ENCODE measurements at regions of chr4 and their contacts with region 1.

Region 1: DNA sequence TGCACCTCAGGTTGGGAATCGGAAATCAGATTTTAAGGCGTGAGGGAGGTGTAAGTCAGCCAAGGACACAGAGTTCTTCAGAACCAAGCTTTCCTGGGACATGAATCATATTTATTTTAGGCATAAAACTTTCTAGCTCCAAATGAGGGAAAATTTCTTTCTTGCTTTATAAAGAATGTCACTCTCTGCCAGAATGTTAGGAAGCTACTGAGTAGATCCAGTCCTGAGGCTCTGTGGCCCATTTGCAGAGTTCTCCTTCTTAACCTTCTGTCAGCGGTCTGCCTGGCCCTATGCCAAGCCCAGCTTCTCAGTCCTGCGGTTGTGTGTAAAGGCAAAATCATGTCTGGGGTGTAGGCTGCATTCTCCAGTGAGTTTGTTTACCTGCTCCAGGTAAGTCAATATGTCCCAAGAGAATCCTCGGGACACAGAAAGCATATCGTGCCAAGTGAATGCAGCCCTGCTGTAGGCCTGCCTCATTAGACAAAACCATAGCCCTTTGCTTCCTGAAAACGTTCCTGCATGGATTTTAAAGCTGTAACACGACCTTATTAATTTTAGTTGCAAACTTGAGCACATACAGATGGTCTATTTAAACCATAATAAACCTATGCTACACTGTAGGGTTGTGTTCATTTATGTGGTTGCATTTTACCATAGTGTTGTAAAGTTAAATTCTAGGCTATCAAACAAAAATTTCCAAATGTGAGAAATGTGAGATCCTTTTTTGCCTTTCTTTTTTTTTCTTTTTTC is 29.2 kb upstream of the CCNI start:
- DNase-seq: peak; percentile 60 to 80 (median 66)
- H3K4me3 ChIP-seq: no peak overlapping the region
- H3K27ac ChIP-seq: no peak overlapping the region
- H3K4me1 ChIP-seq: no peaks in the 10 kb centered on the region
- H3K27me3 ChIP-seq: no peaks in the 10 kb centered on the region
- CTCF ChIP-seq: no peak
- EP300 ChIP-seq: no peak
- POLR2A ChIP-seq: no peak

Region 2: GRCh38 chr4:76546282-76547171 is 558.4 kb before region 1 on chr4:
- intact Hi-C with region 1: no loop called
- DNase-seq: peak in 1 of 5 donors; percentile 24
- H3K4me3 ChIP-seq: no peak overlapping the region
- H3K27ac ChIP-seq: no peak overlapping the region
- H3K4me1 ChIP-seq: no peaks in the 10 kb centered on the region
- H3K27me3 ChIP-seq: no peaks in the 10 kb centered on the region
- CTCF ChIP-seq: no peak
- EP300 ChIP-seq: no peak
- POLR2A ChIP-seq: no peak

Region 3: DNA sequence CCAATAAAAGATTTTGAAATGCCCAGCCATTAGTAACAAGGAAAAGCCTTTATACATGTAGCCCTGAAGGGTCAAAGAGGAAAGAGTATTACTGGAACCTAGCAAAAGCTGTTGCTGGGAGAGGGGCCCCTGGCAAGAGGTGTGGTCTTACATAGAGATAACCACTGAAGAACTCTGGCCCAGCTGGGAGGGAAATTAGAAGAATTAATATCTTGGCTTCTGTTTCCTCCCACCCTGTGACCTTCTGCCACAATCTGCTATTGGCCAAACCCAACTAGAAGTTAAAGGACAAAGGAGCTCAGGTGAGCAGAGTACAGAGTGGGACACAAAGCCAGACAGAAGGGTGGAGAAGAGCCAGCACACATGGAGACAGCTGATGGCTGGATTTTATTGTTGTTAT is 12.8 kb after region 1 on chr4:
- intact Hi-C with region 1: loop called in 1 of 4 experiments (anchors 1 kb)
- DNase-seq: no peak
- H3K4me3 ChIP-seq: no peak overlapping the region
- H3K27ac ChIP-seq: no peak overlapping the region
- H3K4me1 ChIP-seq: no peaks in the 10 kb centered on the region
- H3K27me3 ChIP-seq: no peaks in the 10 kb centered on the region
- CTCF ChIP-seq: no peak
- EP300 ChIP-seq: no peak
- POLR2A ChIP-seq: no peak

Region 4: DNA sequence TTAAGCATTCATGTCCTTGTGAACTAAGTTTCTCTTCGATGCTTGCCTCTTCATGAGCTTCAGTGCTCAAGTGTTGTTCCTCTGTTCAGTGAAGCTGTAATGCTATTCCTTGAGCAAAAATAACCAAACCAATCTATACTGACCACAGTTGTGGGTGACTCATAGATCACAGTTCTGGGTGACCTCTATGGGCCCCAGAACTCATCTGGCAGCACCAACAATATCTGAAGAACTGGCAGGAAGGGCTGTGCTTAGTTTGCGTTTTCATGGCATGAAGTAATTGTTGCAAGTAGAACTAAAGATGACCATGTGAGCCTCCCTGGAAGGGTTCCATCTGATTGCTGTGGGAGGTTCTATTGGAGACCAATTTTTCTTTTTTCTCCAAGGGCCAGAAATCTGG is 158.3 kb after region 1 on chr4:
- intact Hi-C with region 1: no loop called
- DNase-seq: no peak
- H3K4me3 ChIP-seq: no peak overlapping the region
- H3K27ac ChIP-seq: no peak overlapping the region
- H3K4me1 ChIP-seq: no peaks in the 10 kb centered on the region
- H3K27me3 ChIP-seq: no peaks in the 10 kb centered on the region
- CTCF ChIP-seq: no peak
- EP300 ChIP-seq: no peak
- POLR2A ChIP-seq: no peak